PC-3 (cell line): ENCODE measurements at regions of chr4 and their contacts with region 1.

Region 1: GRCh38 chr4:21901831-21902230 is 46.7 kb downstream of the KCNIP4 start:
- DNase-seq: peak; percentile 92
- ATAC-seq: peak; percentile 70
- H3K4me3 ChIP-seq: peak overlapping the region; percentile 44; the same call in 1 of the 2 replicates
- H3K27ac ChIP-seq: peak overlapping the region; percentile 100
- H3K4me1 ChIP-seq: peaks cover 30% of the 10 kb centered on the region
- H3K27me3 ChIP-seq: no peaks in the 10 kb centered on the region
- CTCF ChIP-seq: no peak

Region 2: GRCh38 chr4:21802406-21802805 is 99.4 kb before region 1 on chr4:
- CTCF ChIA-PET with region 1: no interaction called
- POLR2A ChIA-PET with region 1: no interaction called
- intact Hi-C with region 1: loop called (anchors 1 kb)
- DNase-seq: peak; percentile 73
- ATAC-seq: peak; percentile 98
- H3K4me3 ChIP-seq: no peak overlapping the region
- H3K27ac ChIP-seq: no peak overlapping the region
- H3K4me1 ChIP-seq: peaks cover 15% of the 10 kb centered on the region
- H3K27me3 ChIP-seq: no peaks in the 10 kb centered on the region
- CTCF ChIP-seq: no peak

Region 3: DNA sequence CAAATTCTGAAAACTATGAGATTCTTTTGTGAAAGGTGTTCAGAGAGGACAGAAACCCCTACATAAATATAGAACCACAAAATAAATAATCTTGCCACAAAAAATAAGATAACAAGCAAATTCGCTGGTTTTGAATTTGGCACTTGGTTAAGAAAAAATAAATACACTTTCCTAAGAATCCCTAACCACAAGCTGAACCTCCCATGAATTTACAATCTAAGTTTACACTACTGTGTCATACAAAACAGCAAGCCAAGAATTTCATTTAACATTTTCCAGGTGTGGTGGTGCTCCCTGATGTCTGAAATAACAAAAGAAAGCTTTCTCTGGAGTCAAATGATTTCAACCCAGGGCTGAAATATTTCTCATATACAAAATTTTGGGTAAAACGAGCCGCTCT is 74.3 kb before region 1 on chr4:
- CTCF ChIA-PET with region 1: no interaction called
- POLR2A ChIA-PET with region 1: no interaction called
- intact Hi-C with region 1: loop called (anchors 2 kb)
- DNase-seq: peak; percentile 53
- ATAC-seq: peak; percentile 57
- H3K4me3 ChIP-seq: 0 out of 2 replicates have a peak overlapping the region, but pooled peaks have one; percentile 11
- H3K27ac ChIP-seq: no peak overlapping the region
- H3K4me1 ChIP-seq: 0 out of 2 replicates have a peak, but pooled peaks cover 7% of the 10 kb centered on the region
- H3K27me3 ChIP-seq: no peaks in the 10 kb centered on the region
- CTCF ChIP-seq: no peak

Region 4: DNA sequence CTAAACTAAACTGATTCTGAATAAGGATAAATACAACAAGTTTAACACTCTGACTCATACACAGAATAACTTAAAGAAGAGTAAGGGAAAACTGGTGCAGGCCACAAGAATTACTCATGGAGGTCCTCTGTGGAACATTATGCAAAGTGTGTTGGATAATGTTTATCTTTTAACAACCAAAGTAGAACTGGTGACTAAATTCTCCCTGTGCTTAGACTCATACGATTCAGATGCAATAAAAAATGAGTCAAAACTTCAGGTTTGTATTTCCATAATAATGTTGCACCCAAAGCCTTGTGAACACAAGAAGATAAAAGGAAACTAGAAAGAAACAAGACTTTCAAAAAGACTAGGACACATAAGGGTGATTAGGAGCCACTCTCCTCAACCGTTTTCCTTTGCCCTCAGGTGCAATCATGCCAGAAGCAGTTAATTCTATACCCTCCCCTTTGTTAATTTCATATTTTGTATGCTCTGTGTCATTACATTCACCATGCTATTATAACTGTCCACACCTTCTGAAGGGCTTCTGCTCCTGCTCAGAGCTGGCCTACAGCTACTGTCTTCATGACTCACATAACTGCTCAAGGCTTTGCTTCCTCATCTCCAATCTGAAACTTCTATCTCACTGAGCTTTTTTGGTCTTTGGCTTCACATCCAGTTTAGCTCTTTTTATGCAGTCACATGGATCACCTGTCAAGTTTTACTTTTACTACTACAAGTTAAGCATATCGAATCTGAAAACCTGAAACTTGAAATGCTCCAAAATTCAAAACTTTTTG is 13.4 kb before region 1 on chr4:
- CTCF ChIA-PET with region 1: no interaction called
- POLR2A ChIA-PET with region 1: no interaction called
- intact Hi-C with region 1: loop called (anchors 1 kb)
- DNase-seq: peak; percentile 90
- ATAC-seq: peak; percentile 98
- H3K4me3 ChIP-seq: peak overlapping the region; percentile 33
- H3K27ac ChIP-seq: peak overlapping the region; percentile 94
- H3K4me1 ChIP-seq: peaks cover 35% of the 10 kb centered on the region
- H3K27me3 ChIP-seq: no peaks in the 10 kb centered on the region
- CTCF ChIP-seq: no peak

Region 5: GRCh38 chr4:21964762-21965319 is 63.0 kb after region 1 on chr4:
- CTCF ChIA-PET with region 1: no interaction called
- POLR2A ChIA-PET with region 1: no interaction called
- intact Hi-C with region 1: no loop called
- DNase-seq: no peak
- ATAC-seq: no peak
- H3K4me3 ChIP-seq: no peak overlapping the region
- H3K27ac ChIP-seq: no peak overlapping the region
- H3K4me1 ChIP-seq: no peaks in the 10 kb centered on the region
- H3K27me3 ChIP-seq: no peaks in the 10 kb centered on the region
- CTCF ChIP-seq: no peak

Region 6: GRCh38 chr4:21986307-21986706 is 84.5 kb after region 1 on chr4:
- CTCF ChIA-PET with region 1: no interaction called
- POLR2A ChIA-PET with region 1: no interaction called
- intact Hi-C with region 1: no loop called
- DNase-seq: no peak
- ATAC-seq: no peak
- H3K4me3 ChIP-seq: no peak overlapping the region
- H3K27ac ChIP-seq: no peak overlapping the region
- H3K4me1 ChIP-seq: no peaks in the 10 kb centered on the region
- H3K27me3 ChIP-seq: no peaks in the 10 kb centered on the region
- CTCF ChIP-seq: no peak

Region 7: GRCh38 chr4:22029807-22030206 is 128.0 kb after region 1 on chr4:
- CTCF ChIA-PET with region 1: no interaction called
- POLR2A ChIA-PET with region 1: no interaction called
- intact Hi-C with region 1: loop called (anchors 5 kb)
- DNase-seq: peak; percentile 69
- ATAC-seq: peak; percentile 97
- H3K4me3 ChIP-seq: no peak overlapping the region
- H3K27ac ChIP-seq: peak overlapping the region; percentile 46
- H3K4me1 ChIP-seq: peaks cover 13% of the 10 kb centered on the region
- H3K27me3 ChIP-seq: no peaks in the 10 kb centered on the region
- CTCF ChIP-seq: no peak

Region 8: DNA sequence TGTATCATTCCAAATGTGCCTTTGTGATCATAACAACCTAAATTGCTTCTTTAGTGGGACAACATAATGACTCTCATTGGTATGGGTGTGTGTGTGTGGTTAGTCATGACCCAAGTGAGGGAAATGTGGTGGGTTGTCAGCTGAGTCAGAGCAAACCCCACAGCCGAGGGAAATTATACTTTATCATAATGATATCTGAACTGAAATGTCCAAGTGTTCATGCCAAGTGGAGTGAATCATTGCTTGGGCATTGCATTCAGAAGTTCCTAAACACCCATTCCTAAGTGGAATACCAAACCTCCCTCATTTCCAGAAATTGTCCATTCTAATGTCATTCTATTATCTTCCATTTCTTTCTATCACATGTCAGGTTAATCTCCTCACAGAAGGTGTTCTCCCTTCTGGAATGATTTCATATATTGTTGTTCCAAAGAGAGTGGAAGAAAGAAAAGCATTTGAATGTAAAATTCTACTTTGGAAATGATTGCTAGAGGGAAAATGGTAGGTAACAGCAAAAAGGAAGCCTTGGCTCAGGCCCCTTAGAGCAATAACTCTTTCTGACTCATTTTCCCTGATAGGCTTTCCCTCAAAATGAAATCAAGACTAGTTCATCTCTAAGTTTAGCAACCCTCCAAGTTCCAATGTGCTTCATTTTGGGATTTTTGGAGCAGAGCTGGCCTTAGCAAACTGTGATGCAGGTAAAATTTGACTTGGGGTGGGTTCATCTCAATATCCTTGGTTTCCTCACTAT is 277.5 kb after region 1 on chr4:
- CTCF ChIA-PET with region 1: no interaction called
- POLR2A ChIA-PET with region 1: no interaction called
- intact Hi-C with region 1: loop called (anchors 10 kb)
- DNase-seq: peak; percentile 87
- ATAC-seq: peak; percentile 99
- H3K4me3 ChIP-seq: peak overlapping the region; percentile 35; the same call in 1 of the 2 replicates
- H3K27ac ChIP-seq: peak overlapping the region; percentile 87
- H3K4me1 ChIP-seq: peaks cover 20% of the 10 kb centered on the region
- H3K27me3 ChIP-seq: no peaks in the 10 kb centered on the region
- CTCF ChIP-seq: no peak